ENCODE measurements at regions of chr7 and their contacts with region 1.

Region 1: DNA sequence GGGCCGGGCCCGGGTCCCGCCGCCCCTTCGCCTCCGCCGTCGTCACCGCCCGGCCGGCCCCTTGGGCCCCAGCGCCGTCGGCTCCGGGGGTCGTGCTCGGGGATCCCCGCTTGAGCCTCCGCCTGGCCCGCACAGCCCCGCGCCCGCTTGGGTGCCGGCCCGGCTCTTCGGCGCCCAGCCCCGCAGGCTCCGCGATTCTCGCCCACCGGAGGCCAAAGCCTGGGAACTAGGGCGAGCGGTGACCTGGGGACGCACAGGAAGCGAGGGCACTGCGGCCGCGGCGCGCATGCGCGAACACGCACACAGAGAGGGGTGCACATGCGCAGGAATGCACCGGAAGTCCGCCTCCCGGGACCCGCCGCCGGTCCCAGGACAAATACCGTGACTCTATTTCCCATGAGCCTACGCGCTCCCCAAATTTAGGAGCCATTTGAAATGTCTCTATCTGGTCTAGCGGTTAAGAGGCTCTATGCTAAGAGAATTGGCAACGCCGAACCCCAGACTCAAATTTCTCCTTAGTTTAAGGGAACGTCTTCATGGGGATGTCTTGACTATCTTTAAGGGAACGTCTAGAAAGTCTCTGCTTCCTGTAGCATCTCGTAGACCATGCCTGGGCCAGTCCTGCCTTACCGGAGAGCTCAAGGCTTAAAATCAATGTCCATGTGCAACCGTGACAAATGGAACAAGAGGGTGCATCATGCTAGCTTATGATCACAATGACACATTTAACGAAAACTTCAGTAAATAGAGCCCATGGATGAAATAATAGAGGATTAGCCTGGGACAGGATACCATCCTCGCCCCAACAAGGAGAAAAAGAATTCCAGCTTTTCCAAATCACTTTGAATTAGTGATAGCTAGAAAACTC is at the start of gene ZNF12:
- DNase-seq: peak; percentile 90 to 96 (median 94)
- H3K4me3 ChIP-seq: peak within 1 kb of the TSS; percentile 66 to 100 (median 94)
- H3K27ac ChIP-seq: peak within 1 kb of the TSS in 57 of 59 donors; percentile 12 to 93 (median 79)
- H3K27me3 ChIP-seq: no peaks in the 10 kb centered on the region
- CTCF ChIP-seq: peak in 38 of 56 donors; percentile 9 to 61 (median 34)
- total RNA-seq, gene ZNF12: 15.7 to 30.5 (median 22.7) TPM

Region 2: DNA sequence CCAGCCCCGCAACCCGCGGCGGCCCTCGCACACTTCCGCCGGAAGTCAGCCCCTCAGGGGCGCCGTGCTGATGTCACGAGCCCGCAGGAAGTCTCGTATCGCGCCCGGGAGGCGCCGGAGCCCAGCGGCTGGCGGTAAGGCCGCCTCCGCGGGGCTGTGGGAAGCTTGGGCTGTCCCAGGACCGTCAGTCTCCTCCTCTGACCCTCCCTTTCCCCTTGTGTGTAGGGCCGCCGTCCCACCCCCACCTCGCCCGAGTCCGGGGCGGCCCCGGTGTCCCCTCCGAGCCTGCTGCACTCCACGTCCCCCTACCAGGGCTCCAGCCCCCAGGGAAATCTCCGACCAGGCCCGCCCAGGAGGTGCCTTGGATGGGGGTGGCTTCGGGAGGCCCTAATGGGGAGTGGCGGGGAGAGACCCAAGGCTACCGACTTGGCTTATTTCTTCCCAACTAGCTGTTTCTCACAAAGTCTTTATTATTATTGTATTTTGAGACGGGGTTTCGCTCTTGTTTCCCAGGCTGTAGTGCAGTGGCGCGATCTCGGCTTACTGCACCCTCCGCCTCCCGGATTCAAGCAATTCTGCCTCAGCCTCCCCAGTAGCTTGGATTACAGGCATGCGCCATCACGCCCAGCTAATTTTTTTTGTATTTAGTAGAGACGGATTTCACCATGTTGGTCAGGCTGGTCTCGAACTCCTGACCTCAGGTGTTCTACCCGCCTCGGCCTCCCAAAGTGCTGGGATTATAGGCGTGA is 129.4 kb before region 1 on chr7 and contains the start of gene ZDHHC4:
- intact Hi-C with region 1: loop called in 1 of 2 experiments (anchors 5 kb)
- DNase-seq: peak; percentile 74 to 93 (median 88)
- H3K4me3 ChIP-seq: peak within 1 kb of the TSS; percentile 68 to 95 (median 85)
- H3K27ac ChIP-seq: peak within 1 kb of the TSS; percentile 7 to 98 (median 93)
- H3K27me3 ChIP-seq: no peaks in the 10 kb centered on the region
- CTCF ChIP-seq: peak in 38 of 56 donors; percentile 1 to 59 (median 35)
- total RNA-seq, gene ZDHHC4: 30.5 to 60.4 (median 41.9) TPM

Region 3: GRCh38 chr7:6589829-6590644 is 116.9 kb before region 1 on chr7 and contains the start of gene INTS15:
- intact Hi-C with region 1: loop called in 1 of 2 experiments (anchors 5 kb)
- DNase-seq: peak; percentile 43 to 84 (median 62)
- H3K4me3 ChIP-seq: peak within 1 kb of the TSS; percentile 66 to 98 (median 91)
- H3K27ac ChIP-seq: peak within 1 kb of the TSS in 57 of 59 donors; percentile 18 to 93 (median 82)
- H3K27me3 ChIP-seq: no peaks in the 10 kb centered on the region
- CTCF ChIP-seq: peak in 55 of 56 donors; percentile 34 to 96 (median 74)
- total RNA-seq, gene INTS15: 24.0 to 46.8 (median 35.2) TPM

Region 4: GRCh38 chr7:6637544-6638229 is 69.2 kb before region 1 on chr7:
- intact Hi-C with region 1: loop called (anchors 2 to 5 kb)
- DNase-seq: peak in 1 of 10 donors; percentile 47
- H3K4me3 ChIP-seq: peak overlapping the region; percentile 63 to 99 (median 84)
- H3K27ac ChIP-seq: peak overlapping the region in 35 of 59 donors; percentile 7 to 86 (median 51)
- H3K27me3 ChIP-seq: no peaks in the 10 kb centered on the region
- CTCF ChIP-seq: peak in 1 of 56 donors; percentile 11

Region 5: DNA sequence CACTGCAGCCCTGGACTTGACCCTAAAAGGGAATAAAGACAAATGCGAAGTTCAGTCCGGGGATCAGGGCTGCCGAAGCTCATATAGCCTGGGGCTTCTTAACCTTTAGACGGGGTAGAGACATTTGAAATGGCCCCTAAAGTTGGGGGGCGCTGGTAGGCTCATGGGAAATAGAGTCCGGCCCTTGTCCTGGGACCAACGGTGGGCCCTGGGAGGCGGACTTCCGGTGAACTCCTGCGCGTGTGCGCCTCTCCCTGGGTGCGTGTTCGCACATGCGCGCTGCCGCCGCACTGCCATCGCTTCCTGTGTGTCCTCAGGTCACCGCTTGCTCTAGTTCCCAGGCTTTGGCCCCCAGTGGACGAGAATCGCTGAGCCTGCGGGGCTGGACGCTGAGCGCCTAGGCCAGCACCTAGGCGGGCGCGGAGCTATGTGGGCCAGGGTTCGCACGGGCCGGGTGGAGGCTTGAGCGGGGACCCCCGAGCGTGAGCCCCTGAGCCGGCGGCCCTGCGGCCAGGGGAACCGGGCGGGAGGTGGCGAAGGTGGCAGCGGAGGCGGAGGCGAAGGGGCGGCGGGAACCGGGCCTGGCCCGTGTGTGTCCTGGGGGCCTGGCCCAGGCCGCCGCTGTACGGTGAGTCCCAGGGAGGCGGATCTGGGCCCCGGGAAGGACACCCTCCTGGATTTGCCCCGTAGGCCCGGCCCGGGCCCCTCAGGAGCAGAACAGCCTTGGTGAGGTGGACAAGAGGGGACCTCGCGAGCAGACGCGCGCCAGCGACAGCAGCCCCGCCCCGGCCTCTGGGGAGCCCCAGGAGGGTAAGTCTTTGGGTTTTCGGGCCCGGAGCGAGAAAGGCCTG is 22.8 kb after region 1 on chr7:
- intact Hi-C with region 1: loop called (anchors 1 kb)
- DNase-seq: peak; percentile 83 to 95 (median 92)
- H3K4me3 ChIP-seq: peak overlapping the region; percentile 66 to 99 (median 94)
- H3K27ac ChIP-seq: peak overlapping the region in 54 of 59 donors; percentile 1 to 94 (median 72)
- H3K27me3 ChIP-seq: no peaks in the 10 kb centered on the region
- CTCF ChIP-seq: peak in 53 of 56 donors; percentile 12 to 65 (median 43)